ENCODE measurements at regions of chr6 and their contacts with region 1.

Region 1: DNA sequence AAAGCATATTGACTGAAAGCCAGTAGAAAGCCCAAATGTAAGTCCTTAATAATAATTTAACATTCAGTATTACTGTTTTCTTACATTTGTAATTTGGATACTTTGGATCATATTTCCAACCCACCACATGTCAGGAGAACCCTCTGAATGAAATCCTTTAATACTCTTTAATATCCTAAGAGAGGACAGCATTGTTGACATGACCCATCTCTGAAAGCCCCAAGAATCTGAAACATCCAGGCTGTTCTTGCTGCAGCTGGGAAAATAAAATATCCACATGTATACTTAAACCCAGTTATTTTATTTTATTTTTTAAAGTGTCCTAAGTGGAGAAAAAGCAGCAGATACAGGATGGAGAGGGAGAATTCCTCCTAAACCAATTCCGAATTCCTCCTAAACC is 130.8 kb upstream of the RIPOR2 start:
- DNase-seq: no peak
- ATAC-seq: peak; percentile 58

Region 2: GRCh38 chr6:24855395-24856245 is 211.0 kb before region 1 on chr6:
- intact Hi-C with region 1: loop called (anchors 5 kb)
- DNase-seq: peak; percentile 73
- ATAC-seq: peak; percentile 88